GM12878 (cell line): ENCODE measurements at regions of chr1 and their contacts with region 1.

Region 1: GRCh38 chr1:245953876-245954660 is 553.0 kb downstream of the SMYD3 start:
- DNase-seq: peak; percentile 32
- ATAC-seq: peak; percentile 67
- H3K4me3 ChIP-seq: peak overlapping the region; percentile 66
- H3K27ac ChIP-seq: peak overlapping the region; percentile 98
- H3K4me1 ChIP-seq: peaks cover 25% of the 10 kb centered on the region
- H3K27me3 ChIP-seq: no peaks in the 10 kb centered on the region
- CTCF ChIP-seq: no peak
- EP300 ChIP-seq: no peak
- POLR2A ChIP-seq: no peak
- RAD21 ChIP-seq: no peak

Region 2: DNA sequence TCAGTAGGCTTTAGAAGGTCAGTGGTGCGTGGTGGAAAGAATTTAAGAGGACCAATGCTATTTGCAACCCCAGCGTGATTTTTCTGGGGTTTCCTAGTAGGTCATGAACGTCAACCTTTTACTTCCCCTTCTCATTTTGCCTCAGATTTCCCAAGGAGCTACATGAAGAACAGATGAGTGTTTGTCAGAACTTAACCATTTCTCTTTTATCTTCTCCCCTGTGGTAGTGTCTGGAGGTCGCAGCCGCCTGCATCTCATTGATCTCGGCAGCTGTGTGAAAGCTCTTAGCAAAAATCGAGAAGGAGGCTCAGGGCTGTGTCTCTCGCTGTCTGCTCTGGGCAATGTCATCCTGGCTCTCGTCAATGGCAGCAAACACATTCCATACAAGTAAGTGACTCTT is 308.2 kb before region 1 on chr1:
- CTCF ChIA-PET with region 1: no interaction called
- POLR2A ChIA-PET with region 1: no interaction called
- RAD21 ChIA-PET with region 1: interaction called, 9 read pairs
- SMC1A ChIA-PET with region 1: no interaction called
- in situ Hi-C with region 1: no loop called
- intact Hi-C with region 1: loop called (anchors 5 kb)
- DNase-seq: peak; percentile 72
- ATAC-seq: peak; percentile 76
- H3K4me3 ChIP-seq: peak overlapping the region; percentile 61
- H3K27ac ChIP-seq: peak overlapping the region; percentile 84
- H3K4me1 ChIP-seq: peaks cover 21% of the 10 kb centered on the region
- H3K27me3 ChIP-seq: no peaks in the 10 kb centered on the region
- CTCF ChIP-seq: no peak
- EP300 ChIP-seq: peak; percentile 46 to 78; a peak in 2 of 4 replicates
- POLR2A ChIP-seq: no peak
- RAD21 ChIP-seq: no peak

Region 3: DNA sequence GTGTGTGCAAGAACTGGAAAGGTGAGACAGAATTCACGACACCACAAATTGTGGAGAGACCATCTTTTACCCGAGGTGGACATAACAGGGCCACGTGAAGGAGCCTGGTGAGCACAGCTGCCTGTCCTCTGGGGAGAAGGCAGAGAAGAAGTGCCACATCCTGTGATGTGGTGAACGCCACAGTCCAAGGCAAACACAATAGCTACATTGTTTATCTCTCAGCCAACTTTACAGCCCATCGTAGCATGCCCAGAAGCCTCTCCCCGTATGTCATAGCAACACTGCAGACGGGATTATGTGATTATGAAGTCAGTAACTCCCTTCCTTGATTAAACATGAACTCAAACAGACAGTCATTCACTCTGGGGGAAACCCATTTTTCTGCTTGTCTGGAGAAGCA is 59.2 kb before region 1 on chr1:
- CTCF ChIA-PET with region 1: interaction called, 11 read pairs
- POLR2A ChIA-PET with region 1: interaction called, 5 read pairs
- RAD21 ChIA-PET with region 1: interaction called, 18 read pairs
- SMC1A ChIA-PET with region 1: interaction called, 24 read pairs
- in situ Hi-C with region 1: no loop called
- intact Hi-C with region 1: loop called (anchors 2 kb)
- DNase-seq: peak; percentile 59
- ATAC-seq: peak; percentile 95
- H3K4me3 ChIP-seq: no peak overlapping the region
- H3K27ac ChIP-seq: peak overlapping the region; percentile 47
- H3K4me1 ChIP-seq: peaks cover 4% of the 10 kb centered on the region; the same call in 1 of the 2 replicates
- H3K27me3 ChIP-seq: no peaks in the 10 kb centered on the region
- CTCF ChIP-seq: no peak
- EP300 ChIP-seq: peak; percentile 48 to 67; a peak in 2 of 4 replicates
- POLR2A ChIP-seq: no peak
- RAD21 ChIP-seq: no peak

Region 4: GRCh38 chr1:245901037-245901436 is 53.0 kb before region 1 on chr1:
- CTCF ChIA-PET with region 1: interaction called, 3 read pairs
- POLR2A ChIA-PET with region 1: interaction called, 5 read pairs
- RAD21 ChIA-PET with region 1: interaction called, 18 read pairs
- SMC1A ChIA-PET with region 1: interaction called, 24 read pairs
- in situ Hi-C with region 1: no loop called
- intact Hi-C with region 1: loop called (anchors 2 kb)
- DNase-seq: peak; percentile 54
- ATAC-seq: peak; percentile 87
- H3K4me3 ChIP-seq: no peak overlapping the region
- H3K27ac ChIP-seq: peak overlapping the region; percentile 2; the same call in 1 of the 2 replicates
- H3K4me1 ChIP-seq: peaks cover 8% of the 10 kb centered on the region; the same call in 1 of the 2 replicates
- H3K27me3 ChIP-seq: no peaks in the 10 kb centered on the region
- CTCF ChIP-seq: no peak
- EP300 ChIP-seq: peak; percentile 58 to 64; a peak in 2 of 4 replicates
- POLR2A ChIP-seq: no peak
- RAD21 ChIP-seq: no peak

Region 5: DNA sequence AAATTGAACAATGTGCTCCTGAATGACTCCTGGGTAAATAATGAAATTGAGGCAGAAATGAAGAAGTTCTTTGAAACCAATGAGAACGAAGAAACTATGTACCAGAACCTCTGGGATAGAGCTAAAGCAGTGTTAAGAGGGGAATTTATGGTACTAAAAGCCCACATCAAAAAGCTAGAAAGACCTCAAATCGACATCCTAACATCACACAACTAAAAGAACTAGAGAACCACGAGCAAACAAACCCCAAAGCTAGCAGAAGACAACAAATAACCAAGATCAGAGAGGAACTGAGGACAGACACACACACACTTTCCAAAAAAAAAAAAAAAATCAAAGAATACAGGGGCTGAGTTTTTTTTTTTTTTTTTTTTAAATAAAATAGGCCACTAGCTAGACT is 11.2 kb before region 1 on chr1:
- CTCF ChIA-PET with region 1: interaction called, 6 read pairs
- POLR2A ChIA-PET with region 1: interaction called, 4 read pairs
- RAD21 ChIA-PET with region 1: interaction called, 8 read pairs
- SMC1A ChIA-PET with region 1: interaction called, 23 read pairs
- in situ Hi-C with region 1: no loop called
- intact Hi-C with region 1: no loop called
- DNase-seq: no peak
- ATAC-seq: peak; percentile 25; the same call in 2 of the 3 replicates
- H3K4me3 ChIP-seq: no peak overlapping the region
- H3K27ac ChIP-seq: no peak overlapping the region
- H3K4me1 ChIP-seq: no peaks in the 10 kb centered on the region
- H3K27me3 ChIP-seq: no peaks in the 10 kb centered on the region
- CTCF ChIP-seq: no peak
- EP300 ChIP-seq: no peak
- POLR2A ChIP-seq: no peak
- RAD21 ChIP-seq: no peak

Region 6: DNA sequence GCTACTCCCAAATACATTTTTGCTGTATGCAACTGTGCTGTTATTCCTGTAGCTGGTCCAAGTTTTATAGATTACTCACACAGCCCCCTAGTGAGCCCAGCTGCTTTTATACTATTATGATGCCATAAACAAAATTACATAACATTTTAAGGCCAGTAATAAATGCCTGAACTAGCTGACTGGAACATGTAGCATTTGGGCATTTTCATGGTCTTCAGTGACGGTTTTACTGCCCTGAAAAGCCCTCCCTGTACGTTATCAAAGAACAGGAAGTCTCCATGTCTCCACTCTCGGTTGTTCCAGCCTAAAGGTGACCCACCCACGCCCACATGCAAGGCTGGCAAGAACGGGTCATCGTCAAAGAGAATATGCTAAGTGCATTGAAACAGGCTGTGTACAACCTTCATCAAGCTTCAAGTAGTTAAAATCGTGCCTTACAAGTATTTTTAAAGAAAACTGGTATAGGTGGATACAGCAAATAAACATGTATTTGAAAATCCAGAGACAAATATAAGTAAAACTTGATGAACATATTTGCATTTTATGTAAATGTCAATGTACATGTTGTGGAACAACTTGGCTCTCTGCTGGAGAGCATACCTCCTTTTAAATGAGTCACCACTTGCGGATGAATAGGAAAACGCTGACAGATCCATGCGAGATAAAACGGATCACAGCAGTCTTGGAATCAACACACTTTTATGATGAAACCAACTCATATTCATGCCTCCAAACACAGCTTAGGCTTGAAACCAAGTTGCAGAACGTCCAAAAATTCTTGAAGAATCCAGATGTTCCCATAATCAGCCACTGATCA is 32.5 kb after region 1 on chr1:
- CTCF ChIA-PET with region 1: interaction called, 8 read pairs
- POLR2A ChIA-PET with region 1: interaction called, 14 read pairs
- RAD21 ChIA-PET with region 1: interaction called, 16 read pairs
- SMC1A ChIA-PET with region 1: interaction called, 29 read pairs
- in situ Hi-C with region 1: no loop called
- intact Hi-C with region 1: no loop called
- DNase-seq: no peak
- ATAC-seq: no peak
- H3K4me3 ChIP-seq: no peak overlapping the region
- H3K27ac ChIP-seq: no peak overlapping the region
- H3K4me1 ChIP-seq: peaks cover 16% of the 10 kb centered on the region
- H3K27me3 ChIP-seq: no peaks in the 10 kb centered on the region
- CTCF ChIP-seq: no peak
- EP300 ChIP-seq: no peak
- POLR2A ChIP-seq: no peak
- RAD21 ChIP-seq: no peak